ENCODE measurements at regions of chr5 and their contacts with region 1.

Region 1: DNA sequence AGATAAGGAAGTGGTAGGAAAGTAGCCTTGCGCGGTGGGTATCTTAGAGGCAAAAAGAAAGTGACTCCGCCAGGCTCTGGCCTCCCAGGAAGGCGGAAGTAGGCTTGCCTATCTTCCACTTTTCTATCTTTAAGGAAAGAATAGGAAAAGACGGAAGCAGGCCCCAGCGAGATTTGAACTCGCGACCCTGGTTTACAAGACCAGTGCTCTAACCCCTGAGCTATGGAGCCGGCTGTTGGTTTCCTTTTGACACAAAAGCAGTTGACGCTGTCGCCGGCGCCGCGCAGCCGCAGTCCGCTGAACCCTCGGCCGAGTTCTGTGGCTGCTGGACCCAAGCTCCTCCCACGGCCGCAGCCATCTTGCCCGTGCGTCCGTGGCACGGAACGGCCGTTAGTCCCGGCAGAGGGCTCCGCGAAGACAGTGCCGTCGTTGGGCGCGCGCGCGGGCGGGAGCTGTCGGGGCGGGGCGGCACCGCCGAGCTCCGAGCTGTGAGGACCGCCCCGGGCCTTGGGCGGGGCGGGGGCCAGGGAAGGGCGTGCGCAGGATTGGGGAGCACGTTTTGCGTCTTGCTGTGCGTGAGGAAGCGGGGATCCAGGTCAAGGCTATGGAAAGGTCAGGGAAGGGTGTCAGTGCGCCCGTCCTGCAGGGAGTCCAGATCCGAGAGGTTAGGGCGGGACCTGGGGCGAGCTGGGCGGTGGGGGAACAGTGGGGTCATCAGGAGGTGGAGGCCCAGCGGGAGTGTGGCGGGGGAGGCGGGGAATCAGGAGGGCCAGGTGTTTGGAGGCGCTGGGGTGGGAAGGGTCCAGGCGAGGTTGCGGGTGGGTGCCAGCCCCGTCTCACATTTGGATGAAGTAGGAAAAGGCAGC is 13.2 kb downstream of the TRIM7 start:
- DNase-seq: peak; percentile 90 to 97 (median 94)
- H3K4me3 ChIP-seq: peak overlapping the region; percentile 57 to 100 (median 89)
- H3K27ac ChIP-seq: peak overlapping the region; percentile 57 to 98 (median 94)
- H3K27me3 ChIP-seq: no peaks in the 10 kb centered on the region
- CTCF ChIP-seq: peak in 21 of 56 donors; percentile 7 to 44 (median 14)

Region 2: DNA sequence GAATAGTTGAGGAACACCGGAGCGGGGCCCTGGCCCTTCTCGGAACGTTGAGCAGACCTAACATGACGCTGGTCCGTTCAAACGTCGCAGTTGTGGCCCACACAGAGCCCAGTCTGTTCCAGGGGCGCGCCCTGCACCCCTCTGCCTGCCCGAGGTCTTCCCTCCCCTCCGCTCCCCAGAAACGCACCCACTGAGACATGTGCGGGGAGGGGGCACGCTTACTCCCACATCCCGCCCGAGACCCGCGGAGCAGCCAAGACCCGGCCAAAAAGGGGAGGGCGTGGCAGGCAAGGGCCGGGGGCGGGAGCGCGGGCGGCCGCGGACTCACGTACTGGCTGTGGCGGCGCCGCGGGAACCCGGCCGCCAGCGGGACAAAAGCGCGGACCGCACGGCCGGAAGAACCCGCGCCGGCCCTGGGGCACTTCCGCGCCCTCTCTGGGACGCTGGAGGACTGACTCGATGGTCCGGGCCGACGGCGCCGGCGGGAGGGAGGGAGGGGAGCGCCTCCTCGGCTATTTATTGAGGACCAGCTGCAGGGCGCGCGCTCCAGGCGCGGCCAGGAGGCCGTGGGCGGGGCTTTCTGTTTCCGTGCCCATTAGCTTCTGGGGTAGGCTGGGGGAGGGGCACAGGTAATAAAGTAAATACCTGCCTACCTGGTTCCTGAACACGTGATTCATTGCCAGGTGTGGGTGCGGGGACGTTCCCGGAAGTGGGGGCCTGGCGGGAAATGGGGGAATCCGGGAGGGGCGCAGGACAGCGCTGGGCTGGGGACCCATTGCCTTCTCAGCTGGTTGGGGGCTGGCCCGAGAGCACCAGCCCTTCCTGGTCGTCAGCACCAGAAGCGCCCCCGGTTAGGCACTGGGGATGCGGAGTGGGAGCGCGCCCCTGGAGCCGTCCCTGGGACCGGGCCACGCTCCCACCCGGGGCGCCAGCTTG is 330.6 kb before region 1 on chr5 and contains the start of gene ZFP62:
- intact Hi-C with region 1: loop called in 1 of 2 experiments (anchors 10 kb)
- DNase-seq: peak; percentile 73 to 90 (median 88)
- H3K4me3 ChIP-seq: peak within 1 kb of the TSS; percentile 63 to 100 (median 94)
- H3K27ac ChIP-seq: peak within 1 kb of the TSS; percentile 27 to 94 (median 85)
- H3K27me3 ChIP-seq: no peaks in the 10 kb centered on the region
- CTCF ChIP-seq: peak in 31 of 56 donors; percentile 8 to 49 (median 28)
- total RNA-seq, gene ZFP62: 22.6 to 53.4 (median 34.2) TPM

Region 3: GRCh38 chr5:181207214-181208107 is 15.7 kb after region 1 on chr5:
- intact Hi-C with region 1: loop called (anchors 1 kb)
- DNase-seq: peak; percentile 66 to 88 (median 79)
- H3K4me3 ChIP-seq: peak overlapping the region; percentile 43 to 80 (median 69)
- H3K27ac ChIP-seq: peak overlapping the region in 56 of 59 donors; percentile 9 to 90 (median 77)
- H3K27me3 ChIP-seq: no peaks in the 10 kb centered on the region
- CTCF ChIP-seq: peak in 2 of 56 donors; percentile 5 to 6

Region 4: GRCh38 chr5:181223058-181223728 is 31.4 kb after region 1 on chr5 and contains the start of gene TRIM41:
- intact Hi-C with region 1: loop called (anchors 1 kb)
- DNase-seq: peak; percentile 96 to 99 (median 98)
- H3K4me3 ChIP-seq: peak within 1 kb of the TSS; percentile 59 to 99 (median 88)
- H3K27ac ChIP-seq: peak within 1 kb of the TSS; percentile 78 to 100 (median 98)
- H3K27me3 ChIP-seq: no peaks in the 10 kb centered on the region
- CTCF ChIP-seq: peak in 13 of 56 donors; percentile 8 to 37 (median 17)
- total RNA-seq, gene TRIM41: 33.1 to 102 (median 48.0) TPM

Region 5: GRCh38 chr5:181243512-181244343 is 52.0 kb after region 1 on chr5 and contains the start of gene RACK1:
- intact Hi-C with region 1: loop called (anchors 1 to 10 kb)
- DNase-seq: peak; percentile 81 to 94 (median 91)
- H3K4me3 ChIP-seq: peak within 1 kb of the TSS; percentile 60 to 96 (median 84)
- H3K27ac ChIP-seq: peak within 1 kb of the TSS; percentile 51 to 99 (median 97)
- H3K27me3 ChIP-seq: no peaks in the 10 kb centered on the region
- CTCF ChIP-seq: peak in 23 of 56 donors; percentile 7 to 42 (median 22)
- total RNA-seq, gene RACK1: 308 to 570 (median 390) TPM

Region 6: DNA sequence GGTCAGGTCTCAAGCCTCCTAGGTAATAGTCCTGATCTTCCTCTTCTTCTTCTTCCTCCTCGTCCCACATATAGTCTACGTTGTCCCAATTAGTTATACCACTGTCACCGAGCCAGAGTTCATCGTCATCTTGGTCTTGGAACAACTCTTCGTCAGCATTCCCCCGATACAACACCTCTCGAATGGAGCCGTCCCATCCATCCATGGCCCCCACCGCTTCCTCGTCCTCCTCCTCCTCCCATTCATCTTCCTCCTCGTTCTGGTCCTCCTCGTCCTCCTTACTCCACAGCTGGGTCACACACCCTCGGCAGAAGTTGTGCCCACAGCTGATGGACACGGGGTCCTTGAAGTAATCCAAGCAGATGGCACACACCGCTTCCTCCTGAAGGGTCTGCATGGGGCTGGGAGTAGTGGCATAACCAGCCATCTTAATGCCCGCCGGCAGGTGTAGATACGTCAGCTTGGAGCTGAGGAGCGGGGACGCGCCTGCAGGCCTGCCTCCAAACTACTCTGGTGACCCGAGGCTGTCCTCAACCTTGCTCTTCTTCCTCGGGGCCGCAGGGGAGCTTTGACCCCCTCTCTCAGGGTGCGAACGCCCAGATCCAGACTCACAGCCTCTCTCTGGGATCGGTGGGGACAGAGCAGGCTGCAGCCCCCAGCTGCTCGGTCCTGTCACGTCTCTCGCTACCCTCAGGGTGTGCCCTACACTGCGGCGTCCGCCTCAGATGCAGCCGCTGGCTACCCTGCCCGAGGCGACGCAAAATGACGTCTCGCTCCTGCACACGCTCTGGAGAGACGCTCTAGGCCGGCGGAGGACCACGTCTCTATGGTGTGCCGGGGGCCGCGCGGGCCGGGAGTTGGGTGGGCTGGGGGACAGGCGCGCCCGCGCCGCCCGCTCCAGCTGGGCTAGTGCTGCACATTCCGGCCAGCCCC is 68.9 kb after region 1 on chr5 and contains the start of gene TRIM52:
- intact Hi-C with region 1: loop called in 1 of 2 experiments (anchors 5 kb)
- DNase-seq: peak; percentile 84 to 95 (median 92)
- H3K4me3 ChIP-seq: peak within 1 kb of the TSS; percentile 64 to 100 (median 95)
- H3K27ac ChIP-seq: peak within 1 kb of the TSS; percentile 75 to 99 (median 94)
- H3K27me3 ChIP-seq: no peaks in the 10 kb centered on the region
- CTCF ChIP-seq: peak in 14 of 56 donors; percentile 10 to 37 (median 19)
- total RNA-seq, gene TRIM52: 19.8 to 50.9 (median 31.6) TPM

Measured in dorsolateral prefrontal cortex (tissue), 120 donors.